IMR-90 (cell line): ENCODE measurements at regions of chr5 and their contacts with region 1.

Region 1: DNA sequence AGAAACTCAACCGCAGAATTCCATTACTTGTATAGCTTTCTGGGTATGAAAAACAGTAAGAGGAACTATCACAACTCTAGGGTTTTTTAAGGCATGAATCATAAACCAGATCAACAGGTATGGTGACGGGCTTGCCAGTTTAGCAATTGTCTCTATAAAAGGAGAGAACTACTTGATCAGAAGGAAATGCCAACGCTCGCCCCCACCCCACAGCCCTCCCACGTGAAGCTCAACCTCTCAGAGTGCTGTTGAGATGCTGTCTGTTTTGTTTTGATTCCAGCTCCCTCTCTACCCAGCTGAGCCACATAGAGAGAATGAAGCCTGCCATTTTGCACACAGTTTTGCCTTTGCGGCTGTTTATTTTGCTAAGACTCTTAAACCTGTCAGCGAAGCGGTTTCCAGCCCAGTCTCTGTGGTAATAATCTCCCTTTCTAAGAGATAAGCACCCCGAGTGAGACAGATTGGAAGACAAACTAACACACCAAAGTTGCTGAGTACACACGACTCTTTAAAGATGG is 257.9 kb upstream of the ANKRD55 start:
- DNase-seq: no peak
- ATAC-seq: no peak
- H3K4me3 ChIP-seq: no peak overlapping the region
- H3K27ac ChIP-seq: no peak overlapping the region
- H3K4me1 ChIP-seq: peaks cover 15% of the 10 kb centered on the region
- H3K27me3 ChIP-seq: no peaks in the 10 kb centered on the region
- CTCF ChIP-seq: no peak
- POLR2A ChIP-seq: no peak
- RAD21 ChIP-seq: no peak

Region 2: GRCh38 chr5:56763711-56764466 is 272.9 kb after region 1 on chr5:
- CTCF ChIA-PET with region 1: no interaction called
- POLR2A ChIA-PET with region 1: no interaction called
- dilution Hi-C with region 1: no loop called
- in situ Hi-C with region 1: no loop called
- intact Hi-C with region 1: loop called (anchors 5 kb)
- DNase-seq: peak; percentile 65
- ATAC-seq: peak; percentile 97
- H3K4me3 ChIP-seq: no peak overlapping the region
- H3K27ac ChIP-seq: no peak overlapping the region
- H3K4me1 ChIP-seq: peaks cover 5% of the 10 kb centered on the region
- H3K27me3 ChIP-seq: no peaks in the 10 kb centered on the region
- CTCF ChIP-seq: no peak
- POLR2A ChIP-seq: no peak
- RAD21 ChIP-seq: no peak